ENCODE measurements at regions of chr5 and their contacts with region 1.

Region 1: DNA sequence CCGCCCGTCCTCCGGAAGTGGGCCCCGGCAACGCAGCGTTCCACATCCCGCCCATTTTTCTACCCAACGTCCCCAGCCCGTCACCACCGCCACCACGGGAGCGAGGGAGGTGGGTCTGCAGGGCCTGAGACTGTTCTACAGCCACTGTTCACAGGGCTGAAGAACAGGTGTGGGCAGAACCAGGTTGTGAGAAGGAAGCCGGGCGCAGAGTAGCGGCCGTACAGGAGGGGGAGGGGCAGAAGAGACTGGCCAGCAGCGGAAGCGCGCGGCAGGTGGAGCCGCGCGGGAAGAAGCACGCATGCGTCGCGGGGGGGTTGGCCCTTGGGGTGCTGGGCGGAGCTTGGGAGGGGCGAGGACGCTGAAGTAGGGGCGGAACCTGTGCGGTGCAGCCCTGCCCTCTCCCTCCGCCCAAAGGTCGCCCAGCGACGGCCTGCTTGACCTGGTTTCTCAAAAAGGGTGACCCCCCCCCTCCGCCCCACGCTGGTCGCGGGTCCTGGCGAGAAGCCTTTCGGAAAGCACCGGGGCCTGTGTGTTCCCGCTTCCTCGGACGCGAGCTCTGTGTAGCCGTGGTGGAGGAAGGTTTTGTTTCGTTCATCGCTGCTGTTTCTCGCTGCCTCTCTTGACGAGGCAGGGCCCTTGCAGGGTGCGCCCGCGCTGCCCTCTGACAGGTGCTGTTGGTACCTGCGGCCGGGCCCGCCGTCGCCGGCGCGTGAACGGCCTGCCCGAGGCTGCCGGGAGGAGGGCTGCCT is 7.8 kb upstream of the MGAT1 start:
- DNase-seq: peak; percentile 83
- ATAC-seq: peak; percentile 81
- H3K4me3 ChIP-seq: peak overlapping the region; percentile 57 to 79 (median 72); a peak in 5 of 6 replicates
- H3K27ac ChIP-seq: peak overlapping the region; percentile 100
- H3K4me1 ChIP-seq: peaks cover 52% of the 10 kb centered on the region
- H3K27me3 ChIP-seq: no peaks in the 10 kb centered on the region; a peak in 1 of 5 replicates
- CTCF ChIP-seq: no peak
- EP300 ChIP-seq: no peak
- POLR2A ChIP-seq: peak in 1 of 2 experiments; percentile 59; a peak in 2 of 4 replicates
- RAD21 ChIP-seq: no peak

Region 2: DNA sequence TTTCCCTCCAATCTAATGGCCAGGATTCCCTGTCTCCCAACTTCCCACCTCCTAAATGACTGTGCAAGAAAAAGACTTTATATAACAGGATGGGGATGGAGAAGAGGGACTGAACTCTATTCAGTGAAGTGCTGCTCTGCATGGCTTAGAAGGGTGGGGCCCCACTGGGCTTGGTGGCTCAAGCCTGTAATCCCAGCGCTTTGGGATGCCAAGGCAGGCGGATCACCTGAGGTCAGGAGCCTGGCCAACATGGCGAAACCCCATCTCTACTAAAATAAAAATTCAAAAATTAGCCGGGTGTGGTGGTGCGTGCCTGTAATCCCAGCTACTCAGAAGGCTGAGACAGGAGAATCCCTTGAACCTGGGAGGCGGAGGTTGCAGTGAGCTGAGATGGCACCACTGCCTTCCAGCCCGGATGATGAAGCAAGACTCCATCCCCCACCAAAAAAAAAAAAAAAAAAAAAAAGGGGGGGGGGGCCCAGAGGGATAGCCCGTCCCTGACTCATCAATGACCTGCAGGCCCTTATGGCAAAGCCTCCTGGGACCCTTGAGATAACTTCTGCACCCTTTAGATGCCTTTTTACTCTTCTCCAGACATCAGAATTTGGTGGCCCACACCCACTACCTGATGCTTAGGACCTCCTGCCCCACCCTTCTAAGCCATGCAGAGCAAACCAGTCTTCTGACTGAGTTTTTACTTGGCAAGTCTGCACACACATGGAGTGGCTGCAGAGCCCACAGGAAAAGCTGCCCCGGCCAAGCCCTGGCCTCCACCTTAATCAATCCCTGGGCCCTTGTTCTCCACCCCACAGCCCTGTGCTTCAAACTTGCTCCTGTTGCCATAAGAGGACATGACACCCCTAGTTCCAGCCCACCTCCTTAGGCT is 13.2 kb before region 1 on chr5:
- CTCF ChIA-PET with region 1: no interaction called
- POLR2A ChIA-PET with region 1: interaction called, 18 read pairs
- in situ Hi-C with region 1: no loop called
- intact Hi-C with region 1: no loop called
- DNase-seq: no peak
- ATAC-seq: no peak
- H3K4me3 ChIP-seq: no peak overlapping the region
- H3K27ac ChIP-seq: no peak overlapping the region
- H3K4me1 ChIP-seq: peaks cover 34% of the 10 kb centered on the region
- H3K27me3 ChIP-seq: no peaks in the 10 kb centered on the region
- CTCF ChIP-seq: no peak
- EP300 ChIP-seq: no peak
- POLR2A ChIP-seq: no peak
- RAD21 ChIP-seq: no peak

Region 3: GRCh38 chr5:180825768-180826525 is 15.6 kb after region 1 on chr5:
- CTCF ChIA-PET with region 1: no interaction called
- POLR2A ChIA-PET with region 1: interaction called, 22 read pairs
- in situ Hi-C with region 1: no loop called
- intact Hi-C with region 1: no loop called
- DNase-seq: peak; percentile 86
- ATAC-seq: peak; percentile 80
- H3K4me3 ChIP-seq: no peak overlapping the region; a peak in 1 of 6 replicates
- H3K27ac ChIP-seq: no peak overlapping the region
- H3K4me1 ChIP-seq: peaks cover 28% of the 10 kb centered on the region
- H3K27me3 ChIP-seq: peaks cover 0 to 1% of the 10 kb centered on the region in 2 experiments; a peak in 1 of 5 replicates
- CTCF ChIP-seq: no peak
- EP300 ChIP-seq: no peak
- POLR2A ChIP-seq: no peak
- RAD21 ChIP-seq: no peak

Measured in HepG2 (cell line).